Dendritic cell treated with granulocyte-macrophage colony-stimulating factor and Interleukin-4, amounts not matched to agents 40 ng/mL and 50 ng/mL, for 4 days (primary cell): ENCODE measurements at regions of chr1 and their contacts with region 1.

Region 1: GRCh38 chr1:23916209-23917131 is 3.3 kb upstream of the CNR2 start:
- H3K4me3 Mint-ChIP-seq: no peak overlapping the region
- H3K27ac Mint-ChIP-seq: peak overlapping the region; percentile 71
- H3K4me1 Mint-ChIP-seq: peaks cover 59% of the 10 kb centered on the region
- H3K27me3 Mint-ChIP-seq: no peaks in the 10 kb centered on the region

Region 2: GRCh38 chr1:23772049-23772853 is 144.2 kb before region 1 on chr1:
- intact Hi-C with region 1: loop called (anchors 1 kb)
- H3K4me3 Mint-ChIP-seq: no peak overlapping the region
- H3K27ac Mint-ChIP-seq: no peak overlapping the region
- H3K4me1 Mint-ChIP-seq: no peaks in the 10 kb centered on the region
- H3K27me3 Mint-ChIP-seq: no peaks in the 10 kb centered on the region

Region 3: DNA sequence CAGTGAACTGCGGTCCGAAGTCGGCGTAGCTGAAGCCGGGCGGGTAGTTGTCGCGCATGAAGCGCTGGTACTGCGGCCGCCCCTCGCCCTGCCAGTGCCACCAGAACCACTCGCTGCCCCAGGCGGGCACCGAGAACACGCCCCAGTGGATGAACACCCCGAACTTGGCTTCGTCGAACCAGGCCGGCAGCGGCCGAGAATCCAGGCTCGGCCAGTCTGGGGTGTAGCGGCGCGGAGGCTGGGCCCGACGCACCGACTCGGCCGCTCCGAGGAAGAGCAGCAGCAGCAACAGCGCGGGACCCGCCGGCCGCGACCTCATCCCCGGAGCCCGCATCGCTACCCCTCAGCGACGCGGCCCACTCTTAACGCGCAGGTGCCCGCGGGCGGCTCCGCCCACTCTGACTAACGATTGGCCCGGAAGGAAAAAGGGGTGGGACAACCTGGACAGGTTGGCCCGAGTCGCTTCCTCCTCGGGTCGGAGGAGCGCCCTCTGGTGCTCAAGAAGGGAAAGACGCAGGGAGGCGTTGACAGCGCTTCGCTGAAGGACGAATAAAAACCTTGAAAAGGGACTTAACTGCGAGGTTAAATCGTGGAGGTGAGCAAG is 48.4 kb before region 1 on chr1 and contains the start of gene FUCA1:
- intact Hi-C with region 1: loop called (anchors 1 kb)
- H3K4me3 Mint-ChIP-seq: peak within 1 kb of the TSS; percentile 85
- H3K27ac Mint-ChIP-seq: peak within 1 kb of the TSS; percentile 55
- H3K4me1 Mint-ChIP-seq: peaks cover 52% of the 10 kb centered on the region
- H3K27me3 Mint-ChIP-seq: no peaks in the 10 kb centered on the region

Region 4: DNA sequence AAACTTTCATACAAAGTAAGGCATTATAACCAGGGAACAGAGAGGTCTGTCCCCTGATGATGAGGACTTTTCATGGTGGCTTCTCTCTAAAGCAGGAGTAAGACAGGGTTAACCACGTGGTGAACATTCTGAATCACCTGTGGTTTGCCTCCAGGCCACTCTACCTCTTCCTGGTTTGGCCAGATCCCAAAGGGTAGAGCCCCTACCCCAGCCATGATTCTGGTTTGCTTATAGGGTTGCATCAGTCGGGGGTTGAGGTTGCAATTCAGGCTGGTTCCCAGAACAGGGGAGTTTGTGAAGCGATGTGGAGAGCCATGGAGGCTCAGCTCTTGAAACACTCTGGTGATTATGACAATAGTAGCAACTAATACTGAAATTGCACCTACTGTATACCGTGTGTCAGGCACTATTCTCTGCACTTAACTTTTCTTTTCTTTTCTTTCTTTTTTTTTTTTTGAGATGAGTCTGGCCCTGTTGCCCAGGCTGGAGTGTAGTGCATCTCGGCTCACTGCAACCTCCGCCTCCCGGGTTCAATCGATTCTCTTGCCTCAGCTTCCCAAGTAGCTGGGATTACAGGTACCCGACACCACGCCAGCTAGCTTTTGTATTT is 11.6 kb before region 1 on chr1:
- intact Hi-C with region 1: no loop called
- H3K4me3 Mint-ChIP-seq: no peak overlapping the region
- H3K27ac Mint-ChIP-seq: no peak overlapping the region
- H3K4me1 Mint-ChIP-seq: peaks cover 36% of the 10 kb centered on the region
- H3K27me3 Mint-ChIP-seq: peaks cover 51% of the 10 kb centered on the region